HEK293T (cell line): ENCODE measurements at regions of chr2 and their contacts with region 1.

Region 1: DNA sequence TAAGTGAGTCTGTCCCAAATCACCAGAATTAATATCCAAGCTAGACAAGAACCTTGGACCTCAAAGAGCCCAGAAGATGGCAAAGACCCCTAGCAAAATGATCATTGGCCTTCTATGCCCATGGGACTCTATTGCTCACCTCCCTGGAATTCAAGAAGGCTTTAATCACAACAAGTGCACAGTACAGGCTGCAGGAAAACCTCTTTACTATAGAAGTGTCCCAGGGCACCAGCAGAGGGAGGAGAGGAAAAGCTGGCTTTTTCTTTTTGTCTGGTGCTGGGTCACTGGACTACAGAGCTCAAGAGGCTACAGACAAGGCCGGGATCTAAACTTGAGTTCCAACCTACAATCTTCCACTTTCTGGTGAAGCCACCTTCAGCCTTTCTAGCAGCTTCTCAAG is 88.3 kb upstream of the PPP1CB start:
- DNase-seq: no peak

Region 2: DNA sequence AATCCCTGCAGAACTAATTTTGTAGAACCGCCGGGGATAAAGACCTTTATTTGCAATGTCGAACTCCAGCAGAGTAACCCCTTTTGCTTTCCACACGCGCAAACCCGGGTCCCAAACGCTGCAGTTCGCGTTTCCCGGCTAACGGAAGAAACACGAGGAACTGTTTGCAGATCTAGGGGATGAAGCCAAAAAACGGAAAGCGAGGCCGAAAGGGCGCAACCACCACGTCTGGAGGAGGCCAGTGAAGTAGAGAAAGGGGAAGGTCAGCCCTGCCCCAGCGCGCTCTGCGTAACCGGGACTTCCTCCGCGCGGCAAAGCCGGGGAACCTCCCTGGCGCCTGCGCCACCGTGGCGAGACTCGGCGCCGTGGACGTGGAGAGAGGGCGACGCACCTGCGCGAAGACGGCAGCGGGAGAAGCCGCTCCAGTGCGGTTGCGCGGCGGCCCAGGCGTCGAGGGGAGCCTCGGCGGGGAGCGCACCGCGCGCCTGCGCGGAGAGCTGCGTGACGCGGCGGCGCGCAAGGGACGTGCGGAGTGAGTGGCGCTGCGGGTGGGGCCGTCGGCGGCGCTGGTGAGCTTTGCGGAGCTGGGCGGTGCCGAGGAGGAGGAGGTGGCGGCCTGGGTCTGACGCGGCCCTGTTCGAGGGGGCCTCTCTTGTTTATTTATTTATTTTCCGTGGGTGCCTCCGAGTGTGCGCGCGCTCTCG is 88.0 kb after region 1 on chr2 and contains the start of gene PPP1CB:
- CTCF ChIA-PET with region 1: no interaction called
- POLR2A ChIA-PET with region 1: interaction called, 13 read pairs
- DNase-seq: peak; percentile 92